Activated T-helper 1 cell treated with anti-CD3 and anti-CD28 coated beads, Interleukin-12 subunit alpha, Interleukin-12 subunit beta, Interleukin-2, Interleukin-4 antibody, amounts not matched to agents 30 ng/mL and 10 ng/mL and 1 ng/mL, durations not matched to agents 14 hours and 24 hours and 36 hours (primary cell): ENCODE measurements at regions of chr3 and their contacts with region 1.

Region 1: GRCh38 chr3:157174649-157175498 is 14.9 kb upstream of the CCNL1 start:
- DNase-seq: peak; percentile 98
- H3K4me3 Mint-ChIP-seq: peak overlapping the region; percentile 94
- H3K27ac Mint-ChIP-seq: peak overlapping the region; percentile 96
- H3K4me1 Mint-ChIP-seq: peaks cover 47% of the 10 kb centered on the region
- H3K27me3 Mint-ChIP-seq: peaks cover 2% of the 10 kb centered on the region

Region 2: DNA sequence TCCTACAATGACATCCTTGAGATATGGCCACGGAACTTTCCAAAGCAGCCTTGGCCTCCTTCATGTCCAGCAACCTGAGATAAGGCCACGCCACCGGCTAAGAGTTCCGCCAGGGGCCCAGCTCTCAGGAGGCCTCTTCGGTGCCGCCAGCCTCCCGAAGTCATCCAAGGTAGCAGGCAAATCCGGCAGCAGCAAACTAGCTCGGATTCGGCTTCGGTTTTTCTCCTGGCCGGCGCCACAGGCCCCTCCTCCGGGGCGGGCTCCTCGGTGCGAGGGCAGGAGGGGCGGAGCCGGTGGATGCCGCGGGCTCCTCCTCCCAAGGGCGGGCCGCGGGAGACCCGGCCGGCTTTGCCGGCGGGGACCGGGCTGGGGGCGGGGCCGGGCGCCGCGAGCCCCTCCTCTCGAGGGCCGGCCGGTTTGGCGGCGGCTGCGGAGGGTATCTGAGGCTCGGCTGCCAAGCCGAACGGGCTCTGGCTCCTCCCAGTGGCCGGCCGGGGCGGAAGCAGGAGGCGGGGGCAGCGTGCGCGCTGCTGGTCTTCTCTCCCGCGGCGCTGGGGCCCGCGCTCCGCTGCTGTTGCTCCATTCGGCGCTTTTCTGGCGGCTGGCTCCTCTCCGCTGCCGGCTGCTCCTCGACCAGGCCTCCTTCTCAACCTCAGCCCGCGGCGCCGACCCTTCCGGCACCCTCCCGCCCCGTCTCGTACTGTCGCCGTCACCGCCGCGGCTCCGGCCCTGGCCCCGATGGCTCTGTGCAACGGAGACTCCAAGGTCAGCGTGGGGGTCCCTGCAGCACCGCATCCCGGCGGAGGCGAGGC is 1304.5 kb before region 1 on chr3 and contains the start of gene GMPS:
- intact Hi-C with region 1: loop called (anchors 2 kb)
- DNase-seq: peak; percentile 98
- H3K4me3 Mint-ChIP-seq: peak within 1 kb of the TSS; percentile 98
- H3K27ac Mint-ChIP-seq: peak within 1 kb of the TSS; percentile 96
- H3K4me1 Mint-ChIP-seq: peaks cover 23% of the 10 kb centered on the region
- H3K27me3 Mint-ChIP-seq: no peaks in the 10 kb centered on the region
- total RNA-seq, gene GMPS: 131 and 144 TPM in 2 replicates

Region 3: DNA sequence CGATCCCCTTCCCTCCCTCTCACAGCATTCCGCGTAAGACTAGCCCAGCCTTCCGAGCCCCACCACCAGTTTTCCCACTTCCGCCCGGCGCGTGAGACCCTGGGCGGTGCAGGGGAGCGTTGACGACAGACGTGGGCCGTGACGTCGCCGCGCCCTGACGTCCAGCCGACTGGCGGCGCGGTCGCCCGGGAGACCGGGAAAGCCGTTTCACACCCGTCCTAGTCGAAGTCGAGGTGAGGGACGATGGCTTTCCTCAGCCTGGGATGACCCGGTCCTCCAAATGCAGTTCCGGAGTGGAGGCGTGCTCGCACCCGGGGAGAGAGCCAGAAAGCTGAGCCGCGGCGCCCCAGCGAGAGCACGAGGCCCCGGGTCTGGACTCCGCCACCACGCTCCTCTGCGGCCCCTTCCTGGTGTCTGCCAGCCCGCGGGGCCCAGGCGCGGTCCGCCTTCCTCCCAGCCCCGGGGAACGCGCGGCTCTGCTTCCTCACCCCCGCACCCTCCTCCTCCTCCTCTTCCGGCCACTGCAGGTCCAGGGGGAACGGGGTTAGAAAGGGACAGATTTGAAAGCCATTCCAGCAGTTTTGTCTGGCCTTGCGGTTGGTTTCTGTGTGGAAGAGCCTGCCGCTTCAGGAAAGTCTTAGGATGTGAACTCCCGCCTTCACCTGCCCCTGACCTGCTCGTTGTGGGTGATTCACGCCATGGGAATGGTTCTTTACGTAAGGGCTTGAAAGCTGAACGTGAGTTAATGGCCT is 348.6 kb before region 1 on chr3 and contains the start of gene LEKR1:
- intact Hi-C with region 1: loop called (anchors 1 kb)
- DNase-seq: peak; percentile 64
- H3K4me3 Mint-ChIP-seq: peak within 1 kb of the TSS; percentile 87
- H3K27ac Mint-ChIP-seq: peak within 1 kb of the TSS; percentile 92
- H3K4me1 Mint-ChIP-seq: peaks cover 36% of the 10 kb centered on the region
- H3K27me3 Mint-ChIP-seq: peaks cover 2% of the 10 kb centered on the region
- total RNA-seq, gene LEKR1: 0.57 TPM in 1 of 2 replicates, not detected in the other

Region 4: DNA sequence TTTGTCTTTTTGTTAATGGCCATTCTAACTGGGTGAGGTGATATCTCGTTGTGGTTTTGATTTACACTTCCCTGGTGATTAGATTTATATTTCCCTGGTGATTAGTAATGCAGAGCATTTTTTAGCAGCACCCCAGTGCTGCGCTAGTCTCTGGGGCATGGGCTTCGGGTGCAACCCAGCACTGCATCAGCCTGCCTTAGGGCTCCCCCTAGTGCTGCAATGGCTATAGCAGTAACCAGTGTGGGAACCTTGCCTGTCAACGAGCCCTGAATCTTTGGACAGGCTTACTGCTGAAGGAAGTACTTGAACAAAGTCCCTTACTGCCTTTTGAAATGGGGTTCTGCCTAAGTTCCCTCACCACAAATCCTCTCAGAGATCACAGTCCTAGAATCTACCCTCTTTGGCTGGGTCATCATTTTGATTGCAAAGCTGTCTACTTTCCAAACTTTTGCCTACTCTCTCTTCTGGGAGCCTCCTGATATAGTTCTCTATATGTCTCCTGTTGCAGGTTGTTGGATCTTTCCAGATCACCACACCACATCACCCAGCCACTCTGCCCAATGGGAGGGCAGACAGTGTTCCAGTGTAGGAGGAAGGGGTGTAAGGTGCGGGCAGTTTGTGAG is 64.3 kb after region 1 on chr3:
- intact Hi-C with region 1: loop called (anchors 1 kb)
- DNase-seq: peak; percentile 54
- H3K4me3 Mint-ChIP-seq: no peak overlapping the region
- H3K27ac Mint-ChIP-seq: no peak overlapping the region
- H3K4me1 Mint-ChIP-seq: peaks cover 6% of the 10 kb centered on the region
- H3K27me3 Mint-ChIP-seq: peaks cover 6% of the 10 kb centered on the region

Region 5: DNA sequence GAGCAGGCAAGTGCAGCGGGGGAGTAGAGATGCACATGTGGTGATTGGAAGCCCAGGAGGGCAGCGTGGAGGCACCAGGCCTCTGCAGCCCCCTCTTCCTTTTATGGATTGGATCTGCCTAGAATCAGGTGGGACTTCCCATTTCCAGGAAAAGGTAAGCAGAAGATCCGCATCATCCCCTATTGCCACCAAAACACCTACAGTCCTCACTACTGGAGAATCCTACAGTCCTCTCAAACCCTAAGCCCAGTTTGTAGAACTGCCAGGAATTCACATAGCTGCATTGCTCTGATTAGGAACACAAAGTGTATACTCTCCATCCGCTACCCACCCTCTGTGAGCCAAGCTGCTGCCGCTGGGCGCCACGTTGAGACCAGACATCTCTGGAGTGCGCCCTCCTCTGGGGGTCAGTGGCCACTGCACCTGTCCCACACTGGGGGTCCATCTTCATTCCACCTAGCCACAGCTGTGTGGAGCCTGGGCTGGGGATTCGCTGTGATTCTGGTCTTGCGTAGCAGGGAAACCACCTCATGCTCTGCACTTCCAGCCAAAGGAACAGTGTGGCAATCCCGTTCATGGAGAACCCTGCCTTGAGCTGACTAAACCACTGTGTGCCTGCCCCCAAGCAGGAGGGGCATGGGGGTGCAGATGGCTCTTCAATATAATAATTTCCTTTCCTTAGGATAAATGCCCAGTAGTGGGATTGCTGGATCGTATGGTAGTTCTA is 172.9 kb after region 1 on chr3:
- intact Hi-C with region 1: no loop called
- DNase-seq: no peak
- H3K4me3 Mint-ChIP-seq: no peak overlapping the region
- H3K27ac Mint-ChIP-seq: no peak overlapping the region
- H3K4me1 Mint-ChIP-seq: no peaks in the 10 kb centered on the region
- H3K27me3 Mint-ChIP-seq: no peaks in the 10 kb centered on the region